Activated CD4-positive, alpha-beta T cell treated with anti-CD3 and anti-CD28 coated beads for 36 hours (primary cell): ENCODE measurements at regions of chr2 and their contacts with region 1.

Region 1: GRCh38 chr2:27303093-27304025 is 4.9 kb downstream of the UCN start:
- DNase-seq: peak; percentile 67
- ATAC-seq: peak; percentile 78
- H3K4me3 Mint-ChIP-seq: peak overlapping the region; percentile 56
- H3K27ac Mint-ChIP-seq: peak overlapping the region; percentile 24
- H3K4me1 Mint-ChIP-seq: peaks cover 5% of the 10 kb centered on the region
- H3K27me3 Mint-ChIP-seq: peaks cover 10% of the 10 kb centered on the region

Region 2: DNA sequence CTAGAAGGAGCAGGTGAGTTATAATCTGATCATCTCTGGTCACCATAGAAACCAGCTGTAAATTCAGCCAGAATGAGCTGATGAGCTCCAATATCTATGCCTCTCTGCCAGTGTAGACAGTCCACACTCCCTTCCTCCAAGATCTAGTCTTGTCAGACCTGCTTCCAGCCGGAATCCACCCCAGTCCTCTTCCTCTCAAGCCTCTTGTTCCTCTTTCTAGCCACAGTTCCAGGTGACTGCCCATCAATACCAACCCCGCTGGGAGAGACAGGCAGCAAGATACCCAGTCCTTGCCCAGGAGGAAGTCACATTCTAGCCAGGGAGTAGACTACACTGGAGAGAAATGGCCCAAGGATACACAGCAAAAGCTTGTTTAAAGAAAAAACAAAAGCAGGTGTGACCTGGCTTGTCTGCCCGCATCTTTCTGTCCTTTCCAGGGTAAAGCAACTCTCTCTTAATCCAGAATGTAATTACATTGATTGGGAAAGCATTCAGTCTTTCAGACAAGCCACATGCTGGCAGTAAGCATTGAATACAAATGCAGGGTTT is 548.3 kb before region 1 on chr2:
- CTCF ChIA-PET with region 1: no interaction called
- POLR2A ChIA-PET with region 1: no interaction called
- intact Hi-C with region 1: no loop called
- DNase-seq: no peak
- ATAC-seq: no peak
- H3K4me3 Mint-ChIP-seq: no peak overlapping the region
- H3K27ac Mint-ChIP-seq: no peak overlapping the region
- H3K4me1 Mint-ChIP-seq: peaks cover 10% of the 10 kb centered on the region
- H3K27me3 Mint-ChIP-seq: peaks cover 6% of the 10 kb centered on the region

Region 3: GRCh38 chr2:26964446-26965130 is 338.8 kb before region 1 on chr2:
- CTCF ChIA-PET with region 1: interaction called, 8 read pairs
- POLR2A ChIA-PET with region 1: no interaction called
- intact Hi-C with region 1: loop called (anchors 1 to 5 kb)
- DNase-seq: no peak
- ATAC-seq: no peak
- H3K4me3 Mint-ChIP-seq: no peak overlapping the region
- H3K27ac Mint-ChIP-seq: no peak overlapping the region
- H3K4me1 Mint-ChIP-seq: peaks cover 5% of the 10 kb centered on the region
- H3K27me3 Mint-ChIP-seq: peaks cover 28% of the 10 kb centered on the region

Region 4: GRCh38 chr2:27095745-27096651 is 207.4 kb before region 1 on chr2:
- CTCF ChIA-PET with region 1: interaction called, 10 read pairs
- POLR2A ChIA-PET with region 1: no interaction called
- intact Hi-C with region 1: loop called (anchors 1 to 5 kb)
- DNase-seq: peak; percentile 72
- ATAC-seq: peak; percentile 98
- H3K4me3 Mint-ChIP-seq: peak overlapping the region; percentile 35
- H3K27ac Mint-ChIP-seq: peak overlapping the region; percentile 30
- H3K4me1 Mint-ChIP-seq: peaks cover 10% of the 10 kb centered on the region
- H3K27me3 Mint-ChIP-seq: no peaks in the 10 kb centered on the region

Region 5: DNA sequence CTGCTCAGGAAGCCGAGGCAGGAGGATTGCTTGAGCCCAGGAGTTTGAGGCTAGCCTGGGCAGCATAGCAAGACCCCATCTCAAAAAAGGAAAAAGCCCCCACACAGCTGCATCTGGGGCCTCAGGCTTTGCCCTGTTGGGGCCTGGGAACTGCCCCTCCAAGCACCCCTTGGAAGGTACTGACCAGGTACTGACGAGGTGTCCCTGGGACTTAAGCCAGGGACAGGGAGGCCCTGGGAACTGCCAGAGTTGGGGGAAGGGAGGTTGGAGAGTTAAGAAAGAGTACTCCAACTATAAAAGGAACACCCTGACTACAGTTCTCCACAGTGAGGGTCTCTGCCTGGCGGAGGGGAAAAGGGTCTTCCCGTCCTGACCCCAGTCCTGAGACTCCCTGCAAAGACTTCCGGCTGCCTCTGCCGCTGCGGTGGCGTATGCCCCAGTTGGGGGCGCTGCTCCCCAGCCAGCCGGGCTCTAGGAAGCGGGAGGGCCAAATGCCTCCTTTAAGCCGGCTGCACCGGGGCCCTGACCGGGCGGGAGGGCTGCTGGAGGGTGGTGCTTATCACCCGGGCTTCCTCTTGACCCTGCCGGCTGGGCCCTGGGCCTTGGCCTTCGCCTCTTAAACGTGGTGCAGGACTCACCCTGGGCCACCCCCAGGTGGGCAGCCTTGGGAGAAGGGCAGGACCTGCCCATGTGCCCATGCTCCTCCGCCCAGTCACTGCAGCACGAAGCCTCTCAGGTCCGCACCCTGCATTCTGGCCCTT is 53.3 kb before region 1 on chr2:
- CTCF ChIA-PET with region 1: interaction called, 22 read pairs
- POLR2A ChIA-PET with region 1: interaction called, 6 read pairs
- intact Hi-C with region 1: loop called (anchors 1 to 5 kb)
- DNase-seq: peak; percentile 83
- ATAC-seq: peak; percentile 93
- H3K4me3 Mint-ChIP-seq: no peak overlapping the region
- H3K27ac Mint-ChIP-seq: no peak overlapping the region
- H3K4me1 Mint-ChIP-seq: peaks cover 2% of the 10 kb centered on the region
- H3K27me3 Mint-ChIP-seq: peaks cover 4% of the 10 kb centered on the region

Region 6: GRCh38 chr2:27264753-27265535 is 38.4 kb before region 1 on chr2:
- CTCF ChIA-PET with region 1: interaction called, 16 read pairs
- POLR2A ChIA-PET with region 1: no interaction called
- intact Hi-C with region 1: loop called in 1 of 2 experiments (anchors 5 kb)
- DNase-seq: peak; percentile 80
- ATAC-seq: peak; percentile 67
- H3K4me3 Mint-ChIP-seq: peak overlapping the region; percentile 53
- H3K27ac Mint-ChIP-seq: no peak overlapping the region
- H3K4me1 Mint-ChIP-seq: peaks cover 23% of the 10 kb centered on the region
- H3K27me3 Mint-ChIP-seq: peaks cover 41% of the 10 kb centered on the region

Region 7: DNA sequence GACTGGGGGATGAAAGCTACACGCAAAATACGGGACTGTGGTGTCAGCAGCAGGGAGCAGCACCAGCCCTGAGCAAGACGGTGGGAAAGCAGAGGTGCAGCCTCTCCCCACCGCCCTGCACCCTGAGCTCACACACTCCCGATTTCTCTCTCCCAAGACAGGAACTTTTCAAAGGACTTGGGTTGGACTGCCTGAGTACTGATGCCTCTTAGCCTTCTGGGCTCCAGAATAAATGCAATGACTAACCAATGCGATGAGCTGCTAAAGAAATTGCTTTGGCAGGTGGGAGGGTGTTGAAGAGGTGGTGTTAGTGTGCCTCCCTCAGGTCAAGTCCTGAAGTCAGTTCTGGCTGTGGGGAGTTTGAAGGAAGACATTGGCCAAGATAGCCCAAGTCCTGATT is 11.5 kb before region 1 on chr2:
- CTCF ChIA-PET with region 1: interaction called, 23 read pairs
- POLR2A ChIA-PET with region 1: no interaction called
- intact Hi-C with region 1: no loop called
- DNase-seq: no peak
- ATAC-seq: peak; percentile 26
- H3K4me3 Mint-ChIP-seq: no peak overlapping the region
- H3K27ac Mint-ChIP-seq: no peak overlapping the region
- H3K4me1 Mint-ChIP-seq: no peaks in the 10 kb centered on the region
- H3K27me3 Mint-ChIP-seq: peaks cover 6% of the 10 kb centered on the region

Region 8: DNA sequence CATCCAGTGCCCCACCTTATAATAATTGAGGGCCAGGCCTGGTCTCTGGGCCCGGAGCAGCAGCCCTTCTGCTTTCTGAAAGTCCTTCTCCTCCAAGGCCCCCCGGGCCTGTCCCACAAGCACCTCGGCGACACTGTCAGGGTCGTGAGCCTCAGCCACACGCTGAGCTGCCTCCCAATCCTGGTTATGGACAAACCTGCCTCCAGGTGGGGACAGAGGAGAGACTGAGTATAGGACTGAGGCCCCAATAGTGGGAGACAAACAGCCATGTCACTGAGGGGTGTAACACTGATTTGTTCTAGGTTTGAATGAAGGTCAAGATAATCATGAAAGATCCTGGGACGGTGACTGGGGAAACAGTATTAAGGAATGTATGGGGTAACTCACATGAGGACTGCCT is 150.6 kb after region 1 on chr2:
- CTCF ChIA-PET with region 1: no interaction called
- POLR2A ChIA-PET with region 1: no interaction called
- intact Hi-C with region 1: no loop called
- DNase-seq: no peak
- ATAC-seq: no peak
- H3K4me3 Mint-ChIP-seq: no peak overlapping the region
- H3K27ac Mint-ChIP-seq: no peak overlapping the region
- H3K4me1 Mint-ChIP-seq: peaks cover 4% of the 10 kb centered on the region
- H3K27me3 Mint-ChIP-seq: no peaks in the 10 kb centered on the region